Brain microvascular endothelial cell (primary cell): ENCODE measurements at regions of chr4 and their contacts with region 1.

Region 1: GRCh38 chr4:21765810-21766407 is 182.7 kb downstream of the KCNIP4 start:
- DNase-seq: peak; percentile 65
- H3K4me3 ChIP-seq: no peak overlapping the region
- H3K27ac ChIP-seq: no peak overlapping the region
- H3K27me3 ChIP-seq: no peaks in the 10 kb centered on the region
- CTCF ChIP-seq: peak; percentile 86

Region 2: DNA sequence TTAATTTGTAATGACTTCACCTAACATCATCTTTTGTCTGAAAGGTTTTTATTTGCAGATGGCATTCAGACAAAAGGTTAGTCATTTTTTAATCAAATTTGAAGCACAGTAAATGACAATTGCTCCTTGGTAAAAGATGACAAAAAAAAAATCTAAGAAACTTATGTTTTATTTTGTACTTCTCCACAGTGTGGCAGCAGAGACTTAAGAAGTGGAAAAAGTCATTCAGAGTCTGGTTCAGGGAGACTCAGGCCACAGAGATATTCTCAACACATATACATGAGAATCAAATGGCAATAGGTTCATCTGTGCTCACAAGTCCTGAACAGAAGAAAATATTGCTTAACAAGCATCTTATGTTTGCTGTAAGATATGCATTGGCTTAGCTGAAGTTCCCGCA is 253.6 kb before region 1 on chr4:
- in situ Hi-C with region 1: loop called (anchors 25 kb)
- DNase-seq: peak; percentile 45
- H3K4me3 ChIP-seq: no peak overlapping the region
- H3K27ac ChIP-seq: no peak overlapping the region
- H3K27me3 ChIP-seq: no peaks in the 10 kb centered on the region
- CTCF ChIP-seq: peak; percentile 46